ENCODE measurements at regions of chr3 and their contacts with region 1.

Region 1: GRCh38 chr3:4880850-4881249 is 98.4 kb upstream of the BHLHE40 start:
- DNase-seq: no peak
- ATAC-seq: no peak
- H3K4me3 Mint-ChIP-seq: no peak overlapping the region
- H3K27ac Mint-ChIP-seq: no peak overlapping the region
- H3K4me1 Mint-ChIP-seq: peaks cover 31% of the 10 kb centered on the region
- H3K27me3 Mint-ChIP-seq: no peaks in the 10 kb centered on the region
- CTCF ChIP-seq: no peak

Region 2: DNA sequence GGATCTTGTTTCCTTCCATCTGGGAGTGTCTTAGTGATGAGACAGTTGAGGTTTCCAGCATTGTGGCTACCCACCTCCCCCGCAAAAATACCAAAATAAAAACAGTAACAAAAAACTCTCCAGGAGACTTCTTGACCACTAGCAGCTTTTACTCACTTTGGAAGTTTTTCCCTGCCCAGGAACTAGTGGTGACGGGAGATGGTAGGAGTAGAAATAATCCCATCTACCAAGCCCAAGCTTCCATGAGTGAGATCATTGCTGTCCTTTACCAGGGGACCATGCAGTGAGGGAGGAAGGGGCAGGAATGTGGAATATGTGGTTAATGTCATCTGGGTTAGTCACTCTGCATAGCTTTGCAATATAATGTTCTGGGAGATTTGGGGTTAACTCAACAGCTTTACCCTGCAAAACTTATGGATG is 200.0 kb before region 1 on chr3:
- CTCF ChIA-PET with region 1: no interaction called
- POLR2A ChIA-PET with region 1: no interaction called
- intact Hi-C with region 1: no loop called
- DNase-seq: no peak
- ATAC-seq: no peak
- H3K4me3 Mint-ChIP-seq: no peak overlapping the region
- H3K27ac Mint-ChIP-seq: no peak overlapping the region
- H3K4me1 Mint-ChIP-seq: no peaks in the 10 kb centered on the region
- H3K27me3 Mint-ChIP-seq: no peaks in the 10 kb centered on the region
- CTCF ChIP-seq: no peak

Region 3: DNA sequence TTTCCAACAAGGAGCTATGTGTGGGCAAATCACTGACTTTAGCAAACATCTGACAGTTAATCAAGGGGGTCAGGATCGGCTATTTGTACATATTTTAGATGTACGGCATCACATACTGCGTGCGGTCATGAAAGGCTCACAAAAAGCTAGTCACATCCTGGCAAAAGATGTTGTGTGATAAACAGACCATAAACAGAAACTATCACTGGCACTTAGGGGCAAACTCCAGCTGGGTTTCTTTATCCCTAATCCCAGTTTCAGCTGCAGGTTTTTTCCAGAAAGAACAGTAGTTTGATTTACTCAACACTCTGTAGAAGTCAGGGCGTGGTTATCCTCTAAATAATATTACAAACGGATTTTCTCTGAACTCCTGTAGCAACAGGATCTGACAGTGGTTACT is 14.0 kb before region 1 on chr3:
- CTCF ChIA-PET with region 1: interaction called, 15 read pairs
- POLR2A ChIA-PET with region 1: interaction called, 3 read pairs
- intact Hi-C with region 1: no loop called
- DNase-seq: no peak
- ATAC-seq: no peak
- H3K4me3 Mint-ChIP-seq: peak overlapping the region; percentile 86
- H3K27ac Mint-ChIP-seq: peak overlapping the region; percentile 96
- H3K4me1 Mint-ChIP-seq: peaks cover 38% of the 10 kb centered on the region
- H3K27me3 Mint-ChIP-seq: no peaks in the 10 kb centered on the region
- CTCF ChIP-seq: no peak

Region 4: GRCh38 chr3:5095879-5096278 is 215.0 kb after region 1 on chr3:
- CTCF ChIA-PET with region 1: no interaction called
- POLR2A ChIA-PET with region 1: no interaction called
- intact Hi-C with region 1: no loop called
- DNase-seq: peak; percentile 37
- ATAC-seq: peak; percentile 71
- H3K4me3 Mint-ChIP-seq: peak overlapping the region; percentile 46
- H3K27ac Mint-ChIP-seq: no peak overlapping the region
- H3K4me1 Mint-ChIP-seq: peaks cover 3% of the 10 kb centered on the region
- H3K27me3 Mint-ChIP-seq: peaks cover 15% of the 10 kb centered on the region
- CTCF ChIP-seq: no peak